ENCODE measurements at regions of chr19 and their contacts with region 1.

Region 1: GRCh38 chr19:54209811-54210494 is 9.3 kb downstream of the RPS9 start:
- DNase-seq: peak; percentile 96
- ATAC-seq: peak; percentile 81
- H3K4me3 ChIP-seq: 0 out of 4 replicates have a peak overlapping the region, but pooled peaks of 1 of the 2 experiments have one; percentile 5
- H3K27ac ChIP-seq: peak overlapping the region; percentile 64
- H3K4me1 ChIP-seq: peaks cover 60% of the 10 kb centered on the region
- H3K27me3 ChIP-seq: no peaks in the 10 kb centered on the region
- CTCF ChIP-seq: no peak

Region 2: DNA sequence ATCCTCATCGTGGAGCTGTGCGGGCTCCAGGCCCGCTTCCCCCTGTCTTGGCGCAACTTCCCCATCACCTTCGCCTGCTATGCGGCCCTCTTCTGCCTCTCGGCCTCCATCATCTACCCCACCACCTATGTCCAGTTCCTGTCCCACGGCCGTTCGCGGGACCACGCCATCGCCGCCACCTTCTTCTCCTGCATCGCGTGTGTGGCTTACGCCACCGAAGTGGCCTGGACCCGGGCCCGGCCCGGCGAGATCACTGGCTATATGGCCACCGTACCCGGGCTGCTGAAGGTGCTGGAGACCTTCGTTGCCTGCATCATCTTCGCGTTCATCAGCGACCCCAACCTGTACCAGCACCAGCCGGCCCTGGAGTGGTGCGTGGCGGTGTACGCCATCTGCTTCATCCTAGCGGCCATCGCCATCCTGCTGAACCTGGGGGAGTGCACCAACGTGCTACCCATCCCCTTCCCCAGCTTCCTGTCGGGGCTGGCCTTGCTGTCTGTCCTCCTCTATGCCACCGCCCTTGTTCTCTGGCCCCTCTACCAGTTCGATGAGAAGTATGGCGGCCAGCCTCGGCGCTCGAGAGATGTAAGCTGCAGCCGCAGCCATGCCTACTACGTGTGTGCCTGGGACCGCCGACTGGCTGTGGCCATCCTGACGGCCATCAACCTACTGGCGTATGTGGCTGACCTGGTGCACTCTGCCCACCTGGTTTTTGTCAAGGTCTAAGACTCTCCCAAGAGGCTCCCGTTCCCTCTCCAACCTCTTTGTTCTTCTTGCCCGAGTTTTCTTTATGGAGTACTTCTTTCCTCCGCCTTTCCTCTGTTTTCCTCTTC is 336.0 kb before region 1 on chr19:
- CTCF ChIA-PET with region 1: no interaction called
- POLR2A ChIA-PET with region 1: interaction called, 14 read pairs
- in situ Hi-C with region 1: no loop called
- intact Hi-C with region 1: no loop called
- DNase-seq: no peak
- ATAC-seq: no peak
- H3K4me3 ChIP-seq: no peak overlapping the region
- H3K27ac ChIP-seq: no peak overlapping the region; the same call in 1 of the 2 replicates
- H3K4me1 ChIP-seq: peaks cover 43% of the 10 kb centered on the region
- H3K27me3 ChIP-seq: no peaks in the 10 kb centered on the region
- CTCF ChIP-seq: no peak